Stomach (tissue), 19 donors: ENCODE measurements at regions of chr12 and their contacts with region 1.

Region 1: GRCh38 chr12:8226355-8226754 is 1.1 kb downstream of the FAM90A1 start:
- DNase-seq: no peak
- H3K4me3 ChIP-seq: no peak overlapping the region
- H3K27ac ChIP-seq: no peak overlapping the region
- H3K4me1 ChIP-seq: peaks cover 0 to 13% (median 0%) of the 10 kb centered on the region in 4 donors
- H3K27me3 ChIP-seq: peaks cover 0 to 7% (median 0%) of the 10 kb centered on the region in 3 donors
- CTCF ChIP-seq: no peak
- EP300 ChIP-seq: no peak
- POLR2A ChIP-seq: no peak

Region 2: GRCh38 chr12:7695237-7696197 is 530.8 kb before region 1 on chr12 and contains the start of gene GDF3:
- intact Hi-C with region 1: no loop called
- DNase-seq: peak in 1 of 2 donors; percentile 47
- H3K4me3 ChIP-seq: peak within 1 kb of the TSS in 1 of 4 donors; percentile 5
- H3K27ac ChIP-seq: no peak within 1 kb of the TSS
- H3K4me1 ChIP-seq: no peaks in the 10 kb centered on the region
- H3K27me3 ChIP-seq: no peaks in the 10 kb centered on the region
- CTCF ChIP-seq: no peak
- EP300 ChIP-seq: no peak
- POLR2A ChIP-seq: no peak
- total RNA-seq, gene GDF3: not detected

Region 3: DNA sequence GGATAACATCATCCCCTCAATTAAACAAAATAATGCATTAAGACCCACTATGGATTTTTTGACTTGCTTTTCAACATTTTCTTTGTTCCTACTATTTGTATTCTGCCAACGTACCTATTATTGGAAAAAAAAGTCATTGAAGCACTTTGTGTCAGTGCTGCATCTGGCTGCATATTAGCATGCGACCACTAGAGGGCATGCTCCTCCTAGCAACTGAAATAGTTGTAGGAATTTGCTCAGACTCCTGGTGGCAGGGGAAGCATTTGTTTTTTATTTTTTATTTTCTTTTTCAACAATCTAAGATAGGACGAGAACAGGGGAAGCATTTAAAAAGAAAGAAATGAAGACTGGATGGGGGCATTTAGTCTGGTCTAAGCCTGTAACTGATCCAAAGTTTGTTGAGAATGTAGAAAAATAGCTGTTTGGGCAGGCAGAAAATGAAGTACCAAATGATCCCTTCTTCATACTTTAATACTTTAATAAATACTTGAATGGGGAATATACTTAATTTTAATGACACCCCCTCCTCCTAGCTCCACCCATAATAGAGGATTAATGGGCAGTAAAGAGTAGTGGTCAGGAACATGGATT is 117.5 kb before region 1 on chr12:
- intact Hi-C with region 1: loop called (anchors 10 kb)
- DNase-seq: peak; percentile 77 to 93
- H3K4me3 ChIP-seq: no peak overlapping the region
- H3K27ac ChIP-seq: no peak overlapping the region
- H3K4me1 ChIP-seq: no peaks in the 10 kb centered on the region
- H3K27me3 ChIP-seq: no peaks in the 10 kb centered on the region
- CTCF ChIP-seq: peak in 5 of 7 experiments; percentile 87 to 97 (median 92)
- EP300 ChIP-seq: no peak
- POLR2A ChIP-seq: no peak